PC-9 (cell line): ENCODE measurements at regions of chr3 and their contacts with region 1.

Region 1: GRCh38 chr3:161274719-161275298 is 53.7 kb downstream of the NMD3 start:
- DNase-seq: peak in 1 of 2 experiments; percentile 43
- H3K4me3 ChIP-seq: no peak overlapping the region
- H3K27ac ChIP-seq: no peak overlapping the region
- H3K4me1 ChIP-seq: no peaks in the 10 kb centered on the region
- H3K27me3 ChIP-seq: no peaks in the 10 kb centered on the region
- CTCF ChIP-seq: peak; percentile 71

Region 2: GRCh38 chr3:160921020-160921635 is 353.7 kb before region 1 on chr3:
- CTCF ChIA-PET with region 1: no interaction called
- POLR2A ChIA-PET with region 1: interaction called, 4 read pairs
- intact Hi-C with region 1: loop called (anchors 2 kb)
- DNase-seq: peak in 1 of 2 experiments; percentile 28
- H3K4me3 ChIP-seq: no peak overlapping the region
- H3K27ac ChIP-seq: no peak overlapping the region
- H3K4me1 ChIP-seq: no peaks in the 10 kb centered on the region
- H3K27me3 ChIP-seq: no peaks in the 10 kb centered on the region
- CTCF ChIP-seq: peak; percentile 91

Region 3: DNA sequence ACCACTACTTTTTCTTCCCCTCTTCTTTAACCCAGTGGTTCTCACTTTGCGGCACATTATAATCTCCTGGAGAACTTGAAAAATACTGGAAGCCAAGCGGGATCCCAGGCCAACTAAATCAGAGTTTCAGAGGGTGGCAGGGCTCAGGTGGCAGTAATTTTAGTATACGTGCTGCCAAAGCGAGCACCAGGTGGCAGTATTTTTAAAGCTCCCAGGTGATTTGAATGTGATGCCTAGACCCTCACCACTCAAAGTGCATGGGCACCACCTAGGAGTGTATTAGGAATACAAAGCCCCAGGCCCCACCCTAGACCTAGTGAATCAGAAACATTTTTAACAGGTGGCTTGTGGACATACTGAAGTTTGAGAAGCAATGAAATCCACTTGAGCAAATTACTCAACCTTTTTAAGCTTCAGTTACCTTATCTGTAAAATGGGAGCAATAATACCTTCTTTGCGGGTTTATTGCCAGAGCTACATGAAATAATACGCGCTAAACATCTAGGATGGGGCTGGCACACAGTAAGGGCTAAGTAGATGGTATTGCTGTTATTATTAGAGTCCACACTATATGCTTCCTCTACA is 177.9 kb before region 1 on chr3:
- CTCF ChIA-PET with region 1: no interaction called
- POLR2A ChIA-PET with region 1: no interaction called
- intact Hi-C with region 1: loop called (anchors 5 kb)
- DNase-seq: peak in 1 of 2 experiments; percentile 15
- H3K4me3 ChIP-seq: no peak overlapping the region
- H3K27ac ChIP-seq: no peak overlapping the region
- H3K4me1 ChIP-seq: no peaks in the 10 kb centered on the region
- H3K27me3 ChIP-seq: no peaks in the 10 kb centered on the region
- CTCF ChIP-seq: peak; percentile 68

Region 4: GRCh38 chr3:161315996-161316685 is 41.3 kb after region 1 on chr3:
- CTCF ChIA-PET with region 1: interaction called, 3 read pairs
- POLR2A ChIA-PET with region 1: no interaction called
- intact Hi-C with region 1: loop called (anchors 1 kb)
- DNase-seq: peak; percentile 82 to 88
- H3K4me3 ChIP-seq: no peak overlapping the region
- H3K27ac ChIP-seq: peak overlapping the region; percentile 64
- H3K4me1 ChIP-seq: peaks cover 32% of the 10 kb centered on the region
- H3K27me3 ChIP-seq: no peaks in the 10 kb centered on the region
- CTCF ChIP-seq: no peak

Region 5: GRCh38 chr3:161409069-161409468 is 134.3 kb after region 1 on chr3:
- CTCF ChIA-PET with region 1: no interaction called
- POLR2A ChIA-PET with region 1: no interaction called
- intact Hi-C with region 1: loop called (anchors 1 kb)
- DNase-seq: peak; percentile 37 to 56
- H3K4me3 ChIP-seq: no peak overlapping the region
- H3K27ac ChIP-seq: no peak overlapping the region
- H3K4me1 ChIP-seq: peaks cover 21% of the 10 kb centered on the region
- H3K27me3 ChIP-seq: no peaks in the 10 kb centered on the region
- CTCF ChIP-seq: peak; percentile 74